Esophagus muscularis mucosa (tissue), 4 donors: ENCODE measurements at regions of chr19 and their contacts with region 1.

Region 1: DNA sequence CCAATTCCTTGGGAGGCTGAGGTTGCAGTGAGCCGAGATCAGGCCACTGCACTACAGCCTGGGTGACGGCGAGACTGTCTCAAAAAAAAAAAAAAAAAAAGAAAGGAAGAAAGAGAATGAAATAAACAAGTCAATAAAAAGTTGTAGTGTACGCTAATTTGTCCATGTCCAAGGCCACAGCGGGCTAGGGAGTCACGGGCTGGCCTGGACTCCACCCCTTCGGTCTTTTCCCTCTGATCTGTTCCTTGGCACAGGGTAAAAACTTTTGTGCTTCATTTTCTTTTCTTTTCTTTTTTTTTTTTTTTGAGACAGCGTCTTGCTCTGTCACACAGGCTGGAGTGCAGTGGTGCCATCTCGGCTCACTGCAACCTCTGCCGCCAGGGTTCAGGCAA is 19.4 kb upstream of the MKNK2 start:
- DNase-seq: no peak
- H3K4me3 ChIP-seq: no peak overlapping the region
- H3K27ac ChIP-seq: peak overlapping the region in 1 of 4 donors; percentile 63
- H3K4me1 ChIP-seq: peaks cover 7 to 29% (median 24%) of the 10 kb centered on the region in 4 donors
- H3K27me3 ChIP-seq: no peaks in the 10 kb centered on the region
- CTCF ChIP-seq: no peak
- EP300 ChIP-seq: no peak
- POLR2A ChIP-seq: no peak

Region 2: DNA sequence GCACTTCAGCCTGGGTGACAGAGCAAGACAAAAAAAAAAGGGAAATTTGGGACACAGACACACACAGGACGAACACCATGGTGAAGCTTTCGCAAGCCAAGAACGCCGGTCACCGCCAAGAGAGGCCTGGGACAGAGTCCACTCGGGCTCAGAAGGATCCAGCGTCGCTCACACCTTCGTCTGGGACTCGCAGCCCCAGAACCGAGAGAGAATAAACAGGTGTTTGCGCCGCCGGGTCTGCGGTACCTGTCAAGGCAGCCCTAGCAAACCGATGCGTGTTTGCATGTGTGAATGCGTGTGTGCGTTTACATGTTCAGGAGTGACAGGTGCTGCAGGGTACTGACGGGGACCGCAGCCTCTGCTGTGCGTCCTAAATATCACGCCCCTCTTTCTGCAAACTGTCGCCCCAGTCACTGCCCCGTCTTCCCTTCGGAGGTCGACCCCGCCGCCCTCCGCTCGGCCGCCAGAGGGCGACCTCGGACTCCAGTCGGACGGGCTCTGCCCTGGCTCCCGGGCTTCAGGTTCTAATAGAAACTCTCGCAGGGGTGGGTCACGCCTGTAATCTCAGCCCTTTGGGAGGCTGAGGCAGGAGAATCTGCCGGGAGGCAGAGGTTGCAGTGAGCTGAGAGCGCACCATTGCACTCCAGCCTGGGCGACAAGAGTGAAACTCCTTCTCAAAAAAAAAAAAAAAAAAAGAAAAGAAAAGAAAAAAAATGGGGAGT is 141.2 kb before region 1 on chr19:
- intact Hi-C with region 1: loop called (anchors 5 kb)
- DNase-seq: no peak
- H3K4me3 ChIP-seq: peak overlapping the region; percentile 42 to 54 (median 44)
- H3K27ac ChIP-seq: no peak overlapping the region
- H3K4me1 ChIP-seq: peaks cover 10 to 20% (median 16%) of the 10 kb centered on the region in 4 donors
- H3K27me3 ChIP-seq: peaks cover 0 to 9% (median 0%) of the 10 kb centered on the region in 4 donors
- CTCF ChIP-seq: peak; percentile 90 to 93 (median 92)
- EP300 ChIP-seq: no peak
- POLR2A ChIP-seq: no peak

Region 3: GRCh38 chr19:2012941-2013914 is 57.2 kb before region 1 on chr19:
- intact Hi-C with region 1: no loop called
- DNase-seq: no peak
- H3K4me3 ChIP-seq: no peak overlapping the region
- H3K27ac ChIP-seq: peak overlapping the region; percentile 27 to 83 (median 72)
- H3K4me1 ChIP-seq: peaks cover 15 to 38% (median 35%) of the 10 kb centered on the region in 4 donors
- H3K27me3 ChIP-seq: no peaks in the 10 kb centered on the region
- CTCF ChIP-seq: no peak
- EP300 ChIP-seq: no peak
- POLR2A ChIP-seq: no peak

Region 4: DNA sequence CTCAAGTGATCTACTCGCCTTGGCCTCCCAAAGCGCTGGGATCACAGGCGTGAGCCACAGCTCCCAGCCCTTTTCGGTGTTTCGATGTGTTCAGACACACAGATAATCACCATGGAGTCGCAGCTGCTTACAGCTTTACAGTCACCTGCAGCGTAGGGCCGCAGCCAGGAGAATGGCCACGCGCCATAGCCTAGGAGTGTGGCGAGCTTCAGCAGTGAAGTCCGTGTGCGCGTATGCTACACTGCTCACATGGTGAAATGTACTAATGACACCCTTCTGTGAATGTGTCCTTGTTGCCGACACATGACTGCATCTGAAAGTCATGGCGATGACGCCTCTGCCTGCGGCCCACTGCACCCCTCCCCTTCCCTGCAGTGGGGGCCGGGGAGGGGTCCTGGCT is 57.3 kb after region 1 on chr19:
- intact Hi-C with region 1: no loop called
- DNase-seq: no peak
- H3K4me3 ChIP-seq: no peak overlapping the region
- H3K27ac ChIP-seq: no peak overlapping the region
- H3K4me1 ChIP-seq: peaks cover 0 to 13% (median 0%) of the 10 kb centered on the region in 4 donors
- H3K27me3 ChIP-seq: no peaks in the 10 kb centered on the region
- CTCF ChIP-seq: no peak
- EP300 ChIP-seq: no peak
- POLR2A ChIP-seq: no peak